ENCODE measurements at regions of chr7 and their contacts with region 1.

Region 1: GRCh38 chr7:2104107-2104710 is 128.5 kb downstream of the MAD1L1 start:
- DNase-seq: peak; percentile 67
- ATAC-seq: peak; percentile 47
- H3K4me3 Mint-ChIP-seq: peak overlapping the region; percentile 61
- H3K27ac Mint-ChIP-seq: peak overlapping the region; percentile 71
- H3K4me1 Mint-ChIP-seq: peaks cover 41% of the 10 kb centered on the region
- H3K27me3 Mint-ChIP-seq: no peaks in the 10 kb centered on the region
- CTCF ChIP-seq: no peak

Region 2: DNA sequence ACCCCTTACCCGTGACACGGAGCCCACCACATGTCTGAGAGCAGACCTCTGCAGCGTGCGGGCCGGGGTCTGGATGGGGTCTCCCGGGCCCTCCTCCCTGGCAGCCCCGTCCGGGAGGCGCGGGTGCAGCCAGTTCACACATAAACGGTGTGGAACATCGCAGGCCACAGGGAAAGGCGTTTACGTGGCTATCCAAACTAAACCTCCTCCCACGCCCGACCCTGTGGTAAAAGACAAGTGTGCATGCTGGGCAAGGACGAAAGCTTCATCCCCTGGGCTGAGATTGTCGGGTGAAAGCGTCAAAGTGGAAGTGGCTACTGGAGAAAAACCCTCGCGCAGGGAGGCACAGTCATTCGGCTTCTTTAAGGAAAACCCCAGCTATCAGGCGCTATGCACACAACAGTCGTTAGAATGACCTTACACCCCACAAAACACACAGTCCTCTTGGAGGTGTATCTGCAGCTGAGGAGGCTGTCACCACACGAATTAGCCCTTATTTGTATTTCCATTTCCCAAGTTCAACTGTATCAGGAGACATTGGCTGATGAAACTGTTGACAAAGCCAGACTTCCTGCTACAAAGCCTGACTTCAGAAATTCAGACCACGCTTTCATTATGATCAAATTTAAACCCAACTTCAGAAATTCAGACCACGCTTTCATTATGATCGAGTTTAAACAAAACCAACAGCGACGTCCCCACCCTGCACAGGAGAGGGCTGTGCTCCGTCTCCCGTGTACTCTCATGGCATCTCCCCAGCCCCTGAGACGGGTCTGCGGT is 1001.0 kb before region 1 on chr7:
- CTCF ChIA-PET with region 1: no interaction called
- POLR2A ChIA-PET with region 1: no interaction called
- intact Hi-C with region 1: no loop called
- DNase-seq: no peak
- ATAC-seq: peak; percentile 46
- H3K4me3 Mint-ChIP-seq: peak overlapping the region; percentile 70
- H3K27ac Mint-ChIP-seq: peak overlapping the region; percentile 76
- H3K4me1 Mint-ChIP-seq: peaks cover 30% of the 10 kb centered on the region
- H3K27me3 Mint-ChIP-seq: peaks cover 13% of the 10 kb centered on the region
- CTCF ChIP-seq: no peak

Region 3: GRCh38 chr7:1579481-1580421 is 524.5 kb before region 1 on chr7:
- CTCF ChIA-PET with region 1: no interaction called
- POLR2A ChIA-PET with region 1: no interaction called
- intact Hi-C with region 1: loop called (anchors 2 kb)
- DNase-seq: peak; percentile 62
- ATAC-seq: peak; percentile 100
- H3K4me3 Mint-ChIP-seq: no peak overlapping the region
- H3K27ac Mint-ChIP-seq: no peak overlapping the region
- H3K4me1 Mint-ChIP-seq: peaks cover 11% of the 10 kb centered on the region
- H3K27me3 Mint-ChIP-seq: no peaks in the 10 kb centered on the region
- CTCF ChIP-seq: peak; percentile 48

Region 4: GRCh38 chr7:1716263-1717094 is 387.7 kb before region 1 on chr7:
- CTCF ChIA-PET with region 1: no interaction called
- POLR2A ChIA-PET with region 1: no interaction called
- intact Hi-C with region 1: no loop called
- DNase-seq: no peak
- ATAC-seq: no peak
- H3K4me3 Mint-ChIP-seq: no peak overlapping the region
- H3K27ac Mint-ChIP-seq: no peak overlapping the region
- H3K4me1 Mint-ChIP-seq: no peaks in the 10 kb centered on the region
- H3K27me3 Mint-ChIP-seq: peaks cover 9% of the 10 kb centered on the region
- CTCF ChIP-seq: no peak

Region 5: DNA sequence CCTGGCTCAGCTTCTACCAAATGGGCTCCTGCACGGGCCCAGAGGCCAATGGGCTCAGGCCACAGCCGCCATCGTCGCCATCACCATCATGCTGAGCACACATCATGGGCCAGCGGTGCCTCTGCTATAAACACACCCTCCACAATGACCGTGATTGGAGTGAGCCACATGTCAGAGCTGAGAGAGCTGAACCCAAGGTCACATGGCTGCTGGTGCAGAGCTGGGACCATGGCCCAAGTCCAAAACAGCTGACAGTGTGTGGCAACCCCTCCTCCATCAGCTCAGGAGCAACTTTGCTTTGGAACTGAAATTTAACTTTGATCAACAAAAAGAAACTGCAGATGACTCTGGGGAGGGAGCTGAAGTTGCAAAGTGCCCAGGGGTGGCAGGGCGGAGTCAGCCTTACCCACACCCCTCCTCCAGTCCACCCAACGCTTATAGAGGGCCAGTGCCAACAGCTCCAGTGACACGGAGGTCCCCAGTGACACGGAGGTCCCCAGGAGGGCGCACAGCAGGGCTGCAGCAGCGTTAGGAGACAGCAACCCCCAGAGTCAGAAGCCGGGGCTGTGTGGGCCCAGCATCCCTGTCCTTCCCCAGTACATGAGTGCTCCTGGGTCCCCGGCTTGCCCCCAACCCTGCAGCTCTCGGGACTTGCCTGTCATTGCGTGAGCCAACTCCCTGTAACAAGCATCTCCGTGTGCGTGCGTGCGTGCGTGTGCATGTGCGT is 184.5 kb before region 1 on chr7:
- CTCF ChIA-PET with region 1: interaction called, 3 read pairs
- POLR2A ChIA-PET with region 1: no interaction called
- intact Hi-C with region 1: loop called (anchors 5 kb)
- DNase-seq: no peak
- ATAC-seq: peak; percentile 32
- H3K4me3 Mint-ChIP-seq: peak overlapping the region; percentile 78
- H3K27ac Mint-ChIP-seq: no peak overlapping the region
- H3K4me1 Mint-ChIP-seq: peaks cover 30% of the 10 kb centered on the region
- H3K27me3 Mint-ChIP-seq: no peaks in the 10 kb centered on the region
- CTCF ChIP-seq: no peak

Region 6: GRCh38 chr7:2037808-2038522 is 66.2 kb before region 1 on chr7:
- CTCF ChIA-PET with region 1: interaction called, 3 read pairs
- POLR2A ChIA-PET with region 1: interaction called, 3 read pairs
- intact Hi-C with region 1: loop called (anchors 2 kb)
- DNase-seq: no peak
- ATAC-seq: peak; percentile 79
- H3K4me3 Mint-ChIP-seq: peak overlapping the region; percentile 86
- H3K27ac Mint-ChIP-seq: peak overlapping the region; percentile 86
- H3K4me1 Mint-ChIP-seq: peaks cover 67% of the 10 kb centered on the region
- H3K27me3 Mint-ChIP-seq: no peaks in the 10 kb centered on the region
- CTCF ChIP-seq: no peak

Region 7: GRCh38 chr7:2138146-2138765 is 34.0 kb after region 1 on chr7:
- CTCF ChIA-PET with region 1: no interaction called
- POLR2A ChIA-PET with region 1: no interaction called
- intact Hi-C with region 1: loop called (anchors 1 kb)
- DNase-seq: peak; percentile 65
- ATAC-seq: peak; percentile 97
- H3K4me3 Mint-ChIP-seq: peak overlapping the region; percentile 87
- H3K27ac Mint-ChIP-seq: peak overlapping the region; percentile 84
- H3K4me1 Mint-ChIP-seq: peaks cover 13% of the 10 kb centered on the region
- H3K27me3 Mint-ChIP-seq: no peaks in the 10 kb centered on the region
- CTCF ChIP-seq: no peak

Region 8: GRCh38 chr7:2209146-2209960 is 105.1 kb after region 1 on chr7:
- CTCF ChIA-PET with region 1: interaction called, 5 read pairs
- POLR2A ChIA-PET with region 1: no interaction called
- intact Hi-C with region 1: loop called (anchors 1 kb)
- DNase-seq: peak; percentile 58
- ATAC-seq: peak; percentile 85
- H3K4me3 Mint-ChIP-seq: no peak overlapping the region
- H3K27ac Mint-ChIP-seq: peak overlapping the region; percentile 59
- H3K4me1 Mint-ChIP-seq: peaks cover 11% of the 10 kb centered on the region
- H3K27me3 Mint-ChIP-seq: no peaks in the 10 kb centered on the region
- CTCF ChIP-seq: no peak

Region 9: DNA sequence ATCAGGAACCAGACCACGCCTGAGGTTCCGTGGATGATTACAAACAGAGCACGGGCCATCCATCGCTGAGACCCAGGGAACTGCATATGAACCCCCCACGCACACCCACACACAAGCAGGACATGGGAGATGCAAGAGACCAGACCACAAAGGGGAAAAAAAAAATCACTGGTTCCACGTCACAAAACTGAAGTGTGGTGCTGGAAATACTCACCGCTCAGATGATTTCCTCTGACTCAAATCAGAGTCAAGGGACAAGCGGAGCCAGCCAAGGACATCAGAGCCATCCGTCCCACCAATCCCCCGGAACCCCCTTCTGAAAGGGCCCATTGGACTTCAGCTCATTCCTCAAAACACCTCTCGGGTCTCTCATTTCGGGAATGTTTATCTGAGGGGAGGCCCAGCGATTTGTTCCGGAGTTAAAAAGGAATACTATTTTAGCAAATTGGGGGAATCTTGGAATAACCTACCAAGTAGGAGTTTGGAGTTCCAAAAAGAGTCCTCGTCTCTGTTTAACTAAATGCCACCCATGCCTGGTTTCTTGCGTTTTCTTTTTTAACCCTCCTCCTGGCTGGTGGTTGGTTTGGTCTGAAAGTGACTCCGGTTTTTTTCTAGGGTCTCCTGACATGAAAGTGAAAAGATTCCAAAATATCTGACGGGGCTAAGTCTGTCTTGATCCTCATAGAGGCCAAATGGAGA is 195.1 kb after region 1 on chr7:
- CTCF ChIA-PET with region 1: no interaction called
- POLR2A ChIA-PET with region 1: interaction called, 4 read pairs
- intact Hi-C with region 1: loop called (anchors 5 kb)
- DNase-seq: peak; percentile 49
- ATAC-seq: peak; percentile 72
- H3K4me3 Mint-ChIP-seq: peak overlapping the region; percentile 77
- H3K27ac Mint-ChIP-seq: peak overlapping the region; percentile 96
- H3K4me1 Mint-ChIP-seq: peaks cover 76% of the 10 kb centered on the region
- H3K27me3 Mint-ChIP-seq: no peaks in the 10 kb centered on the region
- CTCF ChIP-seq: no peak

Measured in activated B cell treated with CpG ODN at 0.5 μM for 24 hours (primary cell).